ENCODE measurements at regions of chr2 and their contacts with region 1.

Region 1: DNA sequence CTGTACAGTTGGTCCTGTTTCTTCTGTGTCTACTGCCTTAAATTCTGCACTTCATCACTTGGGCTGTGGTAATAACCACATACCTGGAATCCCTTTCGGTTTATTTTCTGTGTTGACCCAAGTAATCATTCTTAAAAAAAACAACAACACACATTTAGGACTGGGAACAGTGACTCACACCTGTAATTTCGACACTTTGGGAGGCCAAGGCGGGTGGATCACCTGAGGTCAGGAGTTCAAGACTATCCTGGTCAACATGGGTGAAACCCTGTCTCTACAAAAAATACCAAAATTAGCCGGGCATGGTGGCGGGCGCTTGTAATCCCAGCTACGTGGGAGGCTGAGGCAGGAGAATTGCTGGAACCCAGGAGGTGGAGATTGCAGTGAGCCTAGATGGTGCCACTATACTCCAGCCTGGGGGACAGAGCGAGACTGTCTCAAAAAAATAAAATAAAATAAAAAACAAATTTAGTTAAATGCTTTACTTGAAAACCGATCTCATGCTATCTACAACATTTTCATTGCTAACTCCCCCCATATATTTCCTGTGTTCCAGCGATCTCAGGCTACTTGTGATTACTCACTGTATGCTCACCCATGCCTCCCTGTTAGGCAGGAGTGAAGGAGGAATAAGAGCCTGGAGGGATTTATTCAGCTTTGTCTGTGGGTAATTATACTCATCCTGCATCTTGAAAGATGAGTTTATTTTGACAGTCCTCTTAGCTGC is 18.2 kb downstream of the ACSL3 start:
- DNase-seq: peak; percentile 28
- H3K4me3 Mint-ChIP-seq: peak overlapping the region; percentile 9
- H3K27ac Mint-ChIP-seq: peak overlapping the region; percentile 7
- H3K4me1 Mint-ChIP-seq: peaks cover 42% of the 10 kb centered on the region
- H3K27me3 Mint-ChIP-seq: no peaks in the 10 kb centered on the region
- CTCF ChIP-seq: no peak

Region 2: GRCh38 chr2:222903234-222904220 is 24.5 kb after region 1 on chr2:
- CTCF ChIA-PET with region 1: no interaction called
- intact Hi-C with region 1: loop called (anchors 2 kb)
- DNase-seq: peak; percentile 41
- H3K4me3 Mint-ChIP-seq: no peak overlapping the region
- H3K27ac Mint-ChIP-seq: no peak overlapping the region
- H3K4me1 Mint-ChIP-seq: peaks cover 89% of the 10 kb centered on the region
- H3K27me3 Mint-ChIP-seq: no peaks in the 10 kb centered on the region
- CTCF ChIP-seq: peak; percentile 46